ENCODE measurements at regions of chr17 and their contacts with region 1.

Region 1: DNA sequence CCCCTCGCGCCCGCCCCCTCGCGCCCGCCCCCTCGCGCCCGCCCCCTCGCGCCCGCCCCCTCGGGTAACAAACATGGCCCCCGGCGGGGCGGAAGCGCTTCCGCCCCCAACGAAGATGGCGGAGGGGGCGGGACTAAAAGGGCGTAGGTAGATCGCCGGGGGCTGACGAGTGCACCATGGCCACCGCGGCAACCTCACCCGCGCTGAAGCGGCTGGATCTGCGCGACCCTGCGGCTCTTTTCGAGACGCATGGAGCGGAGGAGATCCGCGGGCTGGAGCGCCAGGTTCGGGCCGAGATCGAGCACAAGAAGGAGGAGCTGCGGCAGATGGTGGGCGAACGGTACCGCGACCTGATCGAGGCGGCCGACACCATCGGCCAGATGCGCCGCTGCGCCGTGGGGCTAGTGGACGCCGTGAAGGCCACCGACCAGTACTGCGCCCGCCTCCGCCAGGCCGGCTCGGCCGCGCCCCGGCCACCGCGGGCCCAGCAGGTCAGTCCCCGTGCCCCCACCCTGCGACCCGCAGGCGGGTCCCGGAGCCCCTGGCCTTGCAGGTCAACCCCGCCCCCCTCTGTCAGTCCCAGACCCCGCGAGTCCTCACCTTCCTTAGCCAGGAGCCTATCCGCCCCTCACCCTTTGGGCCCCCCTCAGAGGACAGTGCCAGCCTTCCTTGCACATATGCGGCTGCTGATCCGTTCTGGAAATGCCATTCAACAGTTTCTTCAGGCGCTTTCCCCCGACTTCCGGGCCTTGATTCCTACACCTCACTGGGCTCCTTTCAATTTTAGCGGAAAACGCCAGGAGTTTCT is at the start of gene COG1:
- DNase-seq: no peak
- H3K4me3 ChIP-seq: peak within 1 kb of the TSS; percentile 95
- H3K27me3 ChIP-seq: no peaks in the 10 kb centered on the region
- CTCF ChIP-seq: no peak
- polyA plus RNA-seq, gene COG1: 39.4 and 54.9 TPM in 2 replicates

Region 2: GRCh38 chr17:72985881-72986720 is 207.0 kb before region 1 on chr17:
- CTCF ChIA-PET with region 1: interaction called, 16 read pairs
- POLR2A ChIA-PET with region 1: no interaction called
- DNase-seq: no peak
- H3K4me3 ChIP-seq: no peak overlapping the region
- H3K27me3 ChIP-seq: no peaks in the 10 kb centered on the region
- CTCF ChIP-seq: peak; percentile 86

Region 3: DNA sequence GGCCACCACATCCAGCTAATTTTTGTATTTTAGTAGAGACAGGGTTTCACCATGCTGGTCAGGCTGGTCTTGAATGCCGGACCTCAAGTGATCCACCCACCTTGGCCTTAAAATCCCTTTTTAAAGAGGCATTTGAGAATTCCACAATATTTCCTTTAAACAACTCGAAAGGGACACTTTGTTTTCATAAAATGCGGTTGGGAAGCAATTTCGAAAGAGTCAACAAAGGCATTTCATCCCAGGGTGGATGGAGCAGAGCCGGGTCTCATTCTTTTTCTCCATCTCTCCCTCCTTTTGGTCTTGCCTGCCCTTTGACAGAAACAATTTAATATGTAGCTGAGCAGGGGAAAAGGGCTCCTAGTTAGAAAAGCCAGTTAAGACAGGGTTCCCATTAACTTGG is 13.7 kb before region 1 on chr17:
- CTCF ChIA-PET with region 1: interaction called, 20 read pairs
- POLR2A ChIA-PET with region 1: no interaction called
- DNase-seq: no peak
- H3K4me3 ChIP-seq: no peak overlapping the region
- H3K27me3 ChIP-seq: no peaks in the 10 kb centered on the region
- CTCF ChIP-seq: no peak

Measured in BJ (cell line).